Heart right ventricle (tissue), 16 donors: ENCODE measurements at regions of chr14 and their contacts with region 1.

Region 1: GRCh38 chr14:88168498-88169165 is 154.4 kb downstream of the KCNK10 start:
- DNase-seq: peak in 1 of 2 donors; percentile 21
- ATAC-seq: peak in 7 of 8 donors; percentile 26 to 82 (median 68)
- H3K4me3 ChIP-seq: no peak overlapping the region
- H3K27ac ChIP-seq: no peak overlapping the region
- H3K4me1 ChIP-seq: peaks cover 0 to 3% (median 0%) of the 10 kb centered on the region in 9 donors
- H3K27me3 ChIP-seq: peaks cover 0 to 31% (median 6%) of the 10 kb centered on the region in 7 donors
- CTCF ChIP-seq: peak; percentile 25 to 73 (median 64)

Region 2: DNA sequence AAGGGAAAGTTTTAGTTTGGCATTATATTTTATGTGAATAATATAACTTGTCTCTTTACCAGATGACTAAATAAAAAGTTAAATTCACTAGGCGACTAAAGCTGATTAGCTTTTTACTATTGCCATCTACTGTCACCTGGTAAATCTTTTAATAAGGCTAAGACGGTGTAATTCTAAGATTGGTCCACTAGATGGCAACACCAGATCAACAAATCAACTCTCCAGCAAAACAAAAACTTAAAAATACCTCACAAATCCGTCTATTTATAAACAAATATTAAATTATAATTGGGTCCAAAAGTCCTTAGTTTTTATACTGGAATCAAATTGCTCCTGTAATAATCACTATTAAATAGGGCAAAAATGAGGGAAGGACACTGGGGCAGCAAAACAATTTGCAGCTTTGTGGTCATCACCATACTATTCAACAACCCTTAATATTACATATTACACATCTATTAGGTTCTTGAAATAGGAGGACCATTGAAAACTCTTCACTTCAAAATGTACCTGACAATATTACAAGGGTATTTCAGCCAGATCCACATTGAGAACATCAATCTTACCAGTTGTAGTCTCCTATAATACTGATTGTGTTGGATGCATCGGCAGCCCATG is 223.5 kb before region 1 on chr14:
- intact Hi-C with region 1: loop called in 8 of 10 experiments (anchors 2 to 10 kb)
- DNase-seq: no peak
- ATAC-seq: no peak
- H3K4me3 ChIP-seq: no peak overlapping the region
- H3K27ac ChIP-seq: no peak overlapping the region
- H3K4me1 ChIP-seq: no peaks in the 10 kb centered on the region
- H3K27me3 ChIP-seq: no peaks in the 10 kb centered on the region
- CTCF ChIP-seq: peak; percentile 52 to 74 (median 69)

Region 3: DNA sequence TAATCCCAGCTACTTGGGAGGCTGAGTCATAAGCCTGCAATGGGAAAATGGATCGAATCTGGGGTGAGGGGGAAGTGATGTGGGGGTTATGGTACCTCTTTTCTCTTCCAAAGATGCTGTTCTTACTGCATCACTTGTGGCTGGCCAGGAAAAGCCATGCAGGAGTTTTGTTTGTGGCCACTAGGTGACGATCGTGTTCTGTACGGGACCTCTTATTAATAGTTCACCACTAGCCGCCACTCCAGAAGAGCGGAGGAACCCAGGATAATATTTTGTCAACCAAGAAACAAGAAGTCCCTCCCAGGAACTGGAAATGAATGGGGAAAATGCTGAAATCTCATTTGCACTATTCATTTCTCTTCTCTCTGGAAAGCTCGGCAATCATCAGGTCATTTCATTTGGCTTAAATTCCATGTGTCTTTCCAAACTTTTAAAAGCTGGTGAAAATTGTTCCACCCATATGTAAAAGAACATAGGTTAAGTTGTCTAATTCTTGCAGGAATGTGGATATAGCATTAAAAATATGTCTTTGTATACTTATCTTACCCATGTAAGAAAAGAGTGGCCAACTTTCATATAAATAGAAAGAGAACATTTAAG is 154.8 kb before region 1 on chr14:
- intact Hi-C with region 1: loop called in 9 of 10 experiments (anchors 2 to 10 kb)
- DNase-seq: peak; percentile 23 to 69
- ATAC-seq: peak; percentile 72 to 94 (median 90)
- H3K4me3 ChIP-seq: no peak overlapping the region
- H3K27ac ChIP-seq: peak overlapping the region in 1 of 10 donors; percentile 46
- H3K4me1 ChIP-seq: peaks cover 0 to 63% (median 0%) of the 10 kb centered on the region in 9 donors
- H3K27me3 ChIP-seq: no peaks in the 10 kb centered on the region
- CTCF ChIP-seq: peak; percentile 79 to 95 (median 89)

Region 4: GRCh38 chr14:88437658-88438057 is 269.0 kb after region 1 on chr14:
- intact Hi-C with region 1: no loop called
- DNase-seq: no peak
- ATAC-seq: no peak
- H3K4me3 ChIP-seq: no peak overlapping the region
- H3K27ac ChIP-seq: no peak overlapping the region
- H3K4me1 ChIP-seq: no peaks in the 10 kb centered on the region
- H3K27me3 ChIP-seq: no peaks in the 10 kb centered on the region
- CTCF ChIP-seq: peak in 3 of 9 donors; percentile 15 to 31 (median 17)